ENCODE measurements at regions of chr5 and their contacts with region 1.

Region 1: GRCh38 chr5:67437905-67438845 is 241.6 kb upstream of the CD180 start:
- DNase-seq: no peak
- ATAC-seq: no peak
- H3K4me3 ChIP-seq: no peak overlapping the region
- H3K27ac ChIP-seq: no peak overlapping the region
- H3K4me1 ChIP-seq: no peaks in the 10 kb centered on the region
- H3K27me3 ChIP-seq: no peaks in the 10 kb centered on the region
- CTCF ChIP-seq: no peak

Region 2: DNA sequence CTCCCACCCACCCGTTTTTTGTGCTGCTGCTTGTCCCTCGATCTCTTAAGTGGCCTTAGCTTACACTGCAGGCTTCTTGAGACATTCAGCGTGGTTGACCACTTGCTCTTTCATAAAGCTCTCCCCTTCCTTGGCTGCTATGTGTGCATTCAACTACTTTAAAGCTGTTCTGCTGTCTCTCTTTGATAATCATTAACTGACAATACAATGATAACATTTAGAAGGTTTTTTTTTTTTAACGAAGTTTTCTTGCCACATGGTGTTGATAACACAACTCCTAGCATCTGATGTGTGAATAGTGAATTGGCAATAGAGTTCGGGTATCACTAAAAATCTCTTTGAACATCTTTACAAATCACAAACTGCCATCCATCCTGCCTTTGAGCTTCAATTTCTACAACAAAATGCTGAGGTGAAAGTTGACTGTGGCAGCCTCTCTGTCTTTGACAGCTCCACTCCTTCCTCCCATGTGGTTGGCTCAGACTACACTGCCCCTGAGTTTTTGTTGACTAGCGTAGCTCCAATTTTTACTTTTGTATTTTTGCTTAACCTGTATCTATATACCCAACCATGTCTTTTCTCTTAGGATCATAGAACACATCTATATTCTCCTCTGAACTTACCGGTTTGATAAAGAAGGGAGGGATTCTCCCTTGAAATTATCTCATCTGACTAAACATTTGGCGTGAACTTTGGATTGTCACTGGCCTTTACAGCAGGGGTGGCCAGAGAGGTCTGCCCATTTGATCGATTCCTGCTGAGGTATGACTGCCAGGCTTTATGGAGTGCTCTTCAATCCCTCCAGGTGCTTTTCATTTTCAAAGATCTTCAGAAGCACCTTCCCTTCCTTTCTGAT is 167.8 kb after region 1 on chr5:
- intact Hi-C with region 1: loop called in 1 of 2 experiments (anchors 1 kb)
- DNase-seq: no peak
- ATAC-seq: no peak
- H3K4me3 ChIP-seq: no peak overlapping the region
- H3K27ac ChIP-seq: no peak overlapping the region
- H3K4me1 ChIP-seq: no peaks in the 10 kb centered on the region
- H3K27me3 ChIP-seq: peaks cover 0 to 3% (median 0%) of the 10 kb centered on the region in 3 donors
- CTCF ChIP-seq: no peak

Measured in psoas muscle (tissue), 8 donors.